ENCODE measurements at regions of chr17 and their contacts with region 1.

Region 1: DNA sequence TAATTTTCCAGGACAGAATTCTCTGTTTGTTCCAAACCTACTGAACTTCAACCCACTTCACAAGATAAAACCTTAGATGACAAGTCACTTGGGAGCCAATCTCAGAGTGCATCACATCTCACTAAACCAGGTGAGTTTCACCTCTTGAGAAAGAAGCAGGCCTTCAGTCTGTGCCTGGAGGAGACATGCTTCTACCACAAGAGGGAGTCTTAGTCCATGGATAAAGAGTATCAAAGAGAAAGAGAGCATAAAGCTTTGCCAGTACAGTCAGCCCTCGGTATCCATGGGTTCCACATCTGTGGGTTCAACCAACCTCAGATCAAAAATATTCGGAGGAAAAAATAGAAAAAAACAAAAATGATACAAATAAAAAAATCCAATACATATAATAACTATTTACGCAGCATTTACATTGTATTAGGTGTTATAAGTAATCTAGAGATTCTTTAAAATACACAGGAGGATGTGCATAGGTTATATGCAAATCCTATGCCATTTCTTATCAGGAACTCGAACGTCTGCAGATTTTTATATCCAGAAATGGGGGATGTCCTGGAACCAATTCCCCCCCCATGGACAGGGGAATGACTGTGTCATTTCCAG is 37.7 kb downstream of the DUSP14 start:
- DNase-seq: peak; percentile 70 to 78
- ATAC-seq: peak; percentile 95 to 97
- H3K4me3 ChIP-seq: no peak overlapping the region
- H3K27ac ChIP-seq: no peak overlapping the region
- H3K4me1 ChIP-seq: no peaks in the 10 kb centered on the region
- CTCF ChIP-seq: peak; percentile 91
- EP300 ChIP-seq: no peak
- POLR2A ChIP-seq: no peak
- RAD21 ChIP-seq: peak; percentile 82 to 89

Region 2: GRCh38 chr17:37283414-37283961 is 243.9 kb before region 1 on chr17:
- CTCF ChIA-PET with region 1: no interaction called
- POLR2A ChIA-PET with region 1: no interaction called
- DNase-seq: no peak
- ATAC-seq: no peak
- H3K4me3 ChIP-seq: no peak overlapping the region
- H3K27ac ChIP-seq: no peak overlapping the region
- H3K4me1 ChIP-seq: no peaks in the 10 kb centered on the region
- CTCF ChIP-seq: no peak
- EP300 ChIP-seq: no peak
- POLR2A ChIP-seq: no peak
- RAD21 ChIP-seq: no peak

Region 3: GRCh38 chr17:37506678-37507077 is 20.7 kb before region 1 on chr17:
- CTCF ChIA-PET with region 1: interaction called, 32 read pairs
- POLR2A ChIA-PET with region 1: no interaction called
- DNase-seq: peak; percentile 76 to 83
- ATAC-seq: peak; percentile 98
- H3K4me3 ChIP-seq: no peak overlapping the region
- H3K27ac ChIP-seq: 0 out of 6 replicates have a peak overlapping the region, but pooled peaks of 1 of the 2 experiments have one; percentile 13
- H3K4me1 ChIP-seq: peaks cover 9% of the 10 kb centered on the region; the same call in 2 of the 3 replicates
- CTCF ChIP-seq: peak; percentile 41
- EP300 ChIP-seq: no peak
- POLR2A ChIP-seq: no peak
- RAD21 ChIP-seq: peak; percentile 17 to 47; a peak in 2 of 5 replicates

Region 4: DNA sequence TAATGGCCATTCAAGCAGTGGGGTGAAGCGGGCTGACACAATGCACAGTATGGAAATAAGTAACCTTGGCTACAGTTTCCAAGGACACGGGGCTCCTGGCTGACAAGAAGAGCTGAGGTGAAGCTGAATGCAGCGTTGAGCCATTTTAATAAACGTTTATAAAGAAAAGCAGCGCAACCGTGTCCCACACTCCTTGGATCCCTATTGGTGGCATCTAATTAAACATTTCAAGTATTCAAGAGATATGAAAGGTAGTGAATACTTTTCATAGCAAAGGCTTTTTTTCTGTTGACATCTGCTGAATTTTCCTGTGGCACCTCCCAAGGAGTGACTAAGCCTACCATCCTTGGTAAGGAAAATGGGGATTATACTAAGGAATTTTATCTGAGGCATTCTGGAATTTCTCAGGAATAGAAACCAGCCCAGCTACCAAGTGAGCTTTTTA is 11.2 kb before region 1 on chr17:
- CTCF ChIA-PET with region 1: interaction called, 32 read pairs
- POLR2A ChIA-PET with region 1: no interaction called
- DNase-seq: no peak
- ATAC-seq: no peak
- H3K4me3 ChIP-seq: no peak overlapping the region
- H3K27ac ChIP-seq: no peak overlapping the region
- H3K4me1 ChIP-seq: no peaks in the 10 kb centered on the region
- CTCF ChIP-seq: no peak
- EP300 ChIP-seq: no peak
- POLR2A ChIP-seq: no peak
- RAD21 ChIP-seq: no peak

Region 5: GRCh38 chr17:37541880-37542660 is 14.7 kb after region 1 on chr17:
- CTCF ChIA-PET with region 1: interaction called, 62 read pairs
- POLR2A ChIA-PET with region 1: no interaction called
- DNase-seq: no peak
- ATAC-seq: no peak
- H3K4me3 ChIP-seq: no peak overlapping the region
- H3K27ac ChIP-seq: no peak overlapping the region; a peak in 1 of 6 replicates
- H3K4me1 ChIP-seq: peaks cover 7% of the 10 kb centered on the region; the same call in 2 of the 3 replicates
- CTCF ChIP-seq: no peak
- EP300 ChIP-seq: no peak
- POLR2A ChIP-seq: no peak
- RAD21 ChIP-seq: no peak

Region 6: DNA sequence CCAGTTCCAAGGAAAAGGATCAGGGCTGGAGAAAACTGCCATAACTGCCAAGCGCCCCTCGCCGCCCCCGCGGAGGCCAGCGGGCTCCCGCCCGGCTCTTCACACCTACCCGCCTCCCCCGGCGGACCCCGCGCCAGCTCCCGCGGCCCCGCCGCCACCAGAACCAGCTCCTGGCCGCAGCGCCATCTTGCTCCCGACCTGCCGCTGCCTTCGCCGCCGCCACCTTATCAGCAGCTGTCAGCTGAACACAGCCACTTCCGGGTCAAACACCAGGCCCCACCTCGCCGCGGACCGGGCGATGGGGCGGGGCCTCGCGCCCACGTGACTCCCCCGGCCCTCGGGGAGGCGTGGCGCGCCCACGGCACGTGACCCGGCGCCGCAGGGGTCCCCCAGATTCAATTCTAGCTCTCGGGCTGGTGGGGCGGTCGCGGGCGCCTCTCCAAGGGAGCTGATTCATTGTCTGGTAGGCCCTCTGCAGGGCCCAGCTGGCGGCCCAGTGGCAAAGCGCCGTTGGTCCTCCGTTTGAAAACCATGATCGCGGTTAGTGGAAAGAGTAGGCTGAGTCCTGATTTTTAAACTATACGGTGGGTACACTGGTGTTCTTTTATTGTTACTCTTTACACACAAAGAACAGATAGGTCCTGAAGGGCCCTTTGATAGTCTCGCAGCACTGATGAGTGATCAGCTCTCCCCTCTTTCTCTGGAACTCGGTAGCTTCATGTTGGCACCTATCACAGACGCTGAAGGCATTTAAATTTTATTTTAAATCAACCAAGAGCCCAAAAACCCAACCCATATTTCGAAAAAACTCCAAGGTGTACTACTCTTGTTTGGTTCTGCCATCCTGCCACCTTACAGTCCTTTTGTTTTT is 82.1 kb after region 1 on chr17 and contains the start of gene SYNRG:
- CTCF ChIA-PET with region 1: interaction called, 15 read pairs
- POLR2A ChIA-PET with region 1: no interaction called
- DNase-seq: peak; percentile 98 to 99
- ATAC-seq: peak; percentile 97
- H3K4me3 ChIP-seq: peak within 1 kb of the TSS; percentile 72
- H3K27ac ChIP-seq: peak within 1 kb of the TSS; percentile 86 to 93
- H3K4me1 ChIP-seq: peaks cover 20% of the 10 kb centered on the region; the same call in 1 of the 3 replicates
- CTCF ChIP-seq: peak; percentile 33; the same call in 1 of the 3 replicates
- EP300 ChIP-seq: peak in 1 of 2 experiments; percentile 20; a peak in 1 of 5 replicates
- POLR2A ChIP-seq: peak; percentile 90
- RAD21 ChIP-seq: peak; percentile 36 to 52
- polyA plus RNA-seq, gene SYNRG: 17.4 and 24.8 TPM in 2 replicates

Region 7: GRCh38 chr17:37742117-37742761 is 214.9 kb after region 1 on chr17:
- CTCF ChIA-PET with region 1: no interaction called
- POLR2A ChIA-PET with region 1: no interaction called
- DNase-seq: peak; percentile 48 to 59
- ATAC-seq: no peak
- H3K4me3 ChIP-seq: peak overlapping the region; percentile 67
- H3K27ac ChIP-seq: peak overlapping the region; percentile 81 to 94
- H3K4me1 ChIP-seq: peaks cover 53% of the 10 kb centered on the region
- CTCF ChIP-seq: no peak
- EP300 ChIP-seq: no peak
- POLR2A ChIP-seq: no peak
- RAD21 ChIP-seq: no peak